HEK293 (cell line): ENCODE measurements at regions of chr6 and their contacts with region 1.

Region 1: DNA sequence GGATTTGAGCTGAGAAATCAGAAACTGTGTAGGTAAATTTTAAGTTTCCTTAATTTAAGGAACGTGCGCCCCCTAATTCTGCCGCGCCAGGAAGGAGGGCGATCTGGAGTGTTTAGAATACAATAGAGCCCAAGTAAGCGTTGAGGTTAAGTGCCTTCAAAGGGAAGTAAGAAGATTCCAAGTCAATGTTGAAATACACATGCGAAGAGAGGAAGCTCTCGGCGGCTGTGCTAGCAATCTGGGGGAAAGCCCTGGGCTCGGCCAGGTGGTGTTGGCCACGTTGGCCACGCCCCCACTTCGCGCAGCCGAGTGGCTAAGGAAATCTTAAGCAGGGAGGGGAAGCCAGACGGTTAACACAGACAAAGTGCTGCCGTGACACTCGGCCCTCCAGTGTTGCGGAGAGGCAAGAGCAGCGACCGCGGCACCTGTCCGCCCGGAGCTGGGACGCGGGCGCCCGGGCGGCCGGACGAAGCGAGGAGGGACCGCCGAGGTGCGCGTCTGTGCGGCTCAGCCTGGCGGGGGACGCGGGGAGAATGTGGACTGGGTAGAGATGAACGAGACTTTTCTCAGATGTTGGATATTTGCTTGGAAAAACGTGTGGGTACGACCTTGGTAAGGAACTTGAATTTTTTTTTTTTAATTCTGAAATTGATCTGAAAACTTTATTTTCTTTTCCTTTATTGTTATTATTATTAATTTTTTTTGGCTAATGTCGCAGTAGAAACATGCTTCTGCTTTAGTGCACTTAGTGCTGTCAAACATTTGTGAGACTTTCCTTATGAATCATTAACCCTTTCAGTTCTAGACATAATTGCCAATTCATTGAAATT is at the start of gene PRDM1:
- H3K4me3 ChIP-seq: peak within 1 kb of the TSS; percentile 52
- H3K27ac ChIP-seq: peak within 1 kb of the TSS; percentile 21; the same call in 1 of the 2 replicates
- H3K4me1 ChIP-seq: peaks cover 8% of the 10 kb centered on the region
- CTCF ChIP-seq: peak; percentile 75

Region 2: GRCh38 chr6:105608711-105609374 is 477.4 kb before region 1 on chr6:
- CTCF ChIA-PET with region 1: no interaction called
- POLR2A ChIA-PET with region 1: no interaction called
- H3K4me3 ChIP-seq: no peak overlapping the region
- H3K27ac ChIP-seq: no peak overlapping the region
- H3K4me1 ChIP-seq: peaks cover 9% of the 10 kb centered on the region
- CTCF ChIP-seq: no peak

Region 3: DNA sequence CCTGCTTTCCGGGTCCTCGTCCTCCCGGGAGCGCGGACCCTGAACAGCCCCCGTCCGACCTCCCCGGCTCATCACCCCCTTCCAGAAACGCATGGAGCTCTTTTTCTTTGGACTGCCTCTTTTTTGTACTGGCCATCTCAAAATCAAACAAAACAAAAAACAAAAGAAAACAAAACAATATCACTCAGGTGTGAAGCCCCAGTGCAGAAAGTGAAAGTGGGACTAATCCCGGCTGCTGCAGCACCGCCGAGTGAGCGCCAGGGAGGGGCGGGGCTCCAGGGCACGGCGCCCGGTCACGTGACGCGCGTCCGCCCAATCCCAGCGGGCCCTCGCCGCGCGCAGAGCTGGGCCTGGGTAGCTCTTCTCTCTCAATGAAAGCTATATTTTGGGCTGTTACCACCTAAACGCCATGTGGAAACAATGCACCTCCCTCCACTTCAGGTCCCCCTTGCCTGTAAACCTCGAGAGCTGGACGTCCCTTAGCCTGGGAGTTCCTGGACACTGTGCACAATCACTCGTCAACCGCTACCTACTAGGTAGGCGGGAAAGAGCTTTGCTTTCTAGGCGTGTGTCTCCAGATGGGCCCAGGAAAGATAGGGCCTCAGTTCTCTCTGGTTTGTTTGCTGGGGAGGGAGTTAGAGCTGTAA is 93.8 kb before region 1 on chr6:
- CTCF ChIA-PET with region 1: interaction called, 11 read pairs
- POLR2A ChIA-PET with region 1: interaction called, 7 read pairs
- H3K4me3 ChIP-seq: peak overlapping the region; percentile 66
- H3K27ac ChIP-seq: peak overlapping the region; percentile 28; the same call in 1 of the 2 replicates
- H3K4me1 ChIP-seq: no peaks in the 10 kb centered on the region
- CTCF ChIP-seq: no peak

Region 4: DNA sequence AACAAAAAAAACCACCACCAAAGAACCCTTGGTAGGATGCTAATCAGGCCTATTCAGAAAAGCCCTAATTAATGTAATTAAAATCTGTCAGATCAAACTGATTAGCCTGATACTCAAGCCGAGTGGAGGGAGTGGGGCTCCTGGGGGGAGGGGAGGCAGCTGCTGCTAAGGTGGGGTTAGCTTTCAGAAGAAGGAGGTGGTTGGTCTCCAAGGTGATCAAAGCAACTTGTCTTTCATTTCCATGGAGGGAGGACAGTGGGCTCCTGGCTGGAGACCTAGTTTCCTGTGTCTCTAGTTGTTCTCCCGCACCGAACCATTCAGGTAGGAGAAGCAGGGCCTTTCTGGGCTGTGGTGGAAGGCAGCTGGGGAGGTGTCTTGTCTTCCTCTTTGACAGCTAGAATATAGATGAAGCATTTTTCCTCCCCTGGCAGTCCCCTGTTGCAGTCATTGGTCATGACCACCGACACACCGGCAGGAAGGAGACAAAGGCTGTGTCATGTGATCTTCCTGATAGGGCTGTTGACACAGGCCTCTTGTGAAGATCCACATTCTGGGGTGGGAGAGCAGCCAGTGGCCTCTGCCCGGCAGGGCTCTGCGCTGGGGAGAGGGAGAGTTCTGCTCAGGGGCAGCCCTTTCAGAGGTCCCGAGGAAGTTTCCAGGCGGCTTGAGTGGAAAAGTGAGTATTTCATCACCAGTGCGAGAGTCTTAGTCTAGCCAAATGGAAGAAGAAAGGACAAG is 39.9 kb before region 1 on chr6:
- CTCF ChIA-PET with region 1: no interaction called
- POLR2A ChIA-PET with region 1: no interaction called
- H3K4me3 ChIP-seq: no peak overlapping the region
- H3K27ac ChIP-seq: no peak overlapping the region
- H3K4me1 ChIP-seq: no peaks in the 10 kb centered on the region
- CTCF ChIP-seq: no peak

Region 5: DNA sequence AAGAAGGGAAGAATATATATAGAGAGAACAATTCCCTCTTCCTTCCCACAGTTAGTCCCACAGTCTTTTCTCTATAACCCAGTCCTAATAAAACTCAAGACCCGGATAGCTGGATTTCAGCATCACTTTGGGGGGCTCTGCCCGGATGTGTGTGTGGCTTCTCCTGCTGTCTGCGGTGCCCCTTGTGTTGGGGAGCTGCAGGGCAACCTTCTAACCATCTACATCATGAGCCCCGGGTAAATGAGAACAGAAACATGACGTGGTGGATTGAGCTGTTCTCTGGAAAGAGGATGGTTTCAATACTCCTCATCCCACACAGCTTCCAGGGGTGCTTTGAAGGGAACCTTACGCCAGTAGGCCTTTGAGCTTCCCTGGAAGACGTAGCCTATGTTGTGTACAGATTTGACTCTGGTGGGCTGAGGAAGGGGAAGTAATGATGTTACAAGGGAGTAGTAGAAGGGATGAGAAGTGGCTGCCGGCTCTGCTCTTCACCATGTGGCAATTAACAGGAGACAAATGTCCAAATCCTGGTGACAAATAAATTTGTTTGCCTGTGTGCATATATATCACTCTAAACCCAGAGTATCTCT is 13.6 kb before region 1 on chr6:
- CTCF ChIA-PET with region 1: interaction called, 10 read pairs
- POLR2A ChIA-PET with region 1: interaction called, 3 read pairs
- H3K4me3 ChIP-seq: no peak overlapping the region
- H3K27ac ChIP-seq: no peak overlapping the region
- H3K4me1 ChIP-seq: peaks cover 8% of the 10 kb centered on the region; the same call in 1 of the 2 replicates
- CTCF ChIP-seq: no peak

Region 6: DNA sequence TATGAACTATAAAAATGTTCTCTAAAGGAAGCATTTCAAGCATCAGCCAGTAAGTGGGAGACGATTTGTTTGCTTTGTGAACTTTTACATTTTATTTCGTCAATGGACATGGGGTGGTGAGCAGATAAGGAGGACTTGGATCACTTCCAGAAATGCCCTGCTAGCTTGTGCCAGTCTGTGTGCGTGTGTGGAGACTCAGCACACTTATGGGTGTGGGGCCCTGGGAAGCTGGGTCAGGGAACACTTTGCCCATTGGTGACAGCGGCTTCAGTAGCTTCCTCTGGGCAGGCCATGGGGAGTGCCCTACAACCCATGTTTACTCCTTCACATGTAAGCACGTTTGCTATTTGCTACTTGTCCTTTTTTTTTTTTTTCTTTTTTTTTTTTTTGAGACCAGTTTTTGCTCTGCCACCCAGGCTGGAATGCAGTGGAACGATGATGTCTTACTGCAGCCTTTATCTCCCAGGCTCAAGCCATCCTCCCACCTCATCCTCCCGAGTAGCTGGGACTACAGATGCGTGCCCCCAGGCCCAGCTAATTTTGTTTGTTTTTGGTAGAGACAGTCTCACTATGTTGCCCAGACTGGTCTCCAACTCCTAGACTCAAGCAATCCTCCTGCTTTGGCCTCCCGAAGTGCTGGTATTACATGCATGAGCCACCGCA is 24.1 kb after region 1 on chr6:
- CTCF ChIA-PET with region 1: no interaction called
- POLR2A ChIA-PET with region 1: no interaction called
- H3K4me3 ChIP-seq: no peak overlapping the region
- H3K27ac ChIP-seq: no peak overlapping the region
- H3K4me1 ChIP-seq: peaks cover 9% of the 10 kb centered on the region
- CTCF ChIP-seq: no peak

Region 7: DNA sequence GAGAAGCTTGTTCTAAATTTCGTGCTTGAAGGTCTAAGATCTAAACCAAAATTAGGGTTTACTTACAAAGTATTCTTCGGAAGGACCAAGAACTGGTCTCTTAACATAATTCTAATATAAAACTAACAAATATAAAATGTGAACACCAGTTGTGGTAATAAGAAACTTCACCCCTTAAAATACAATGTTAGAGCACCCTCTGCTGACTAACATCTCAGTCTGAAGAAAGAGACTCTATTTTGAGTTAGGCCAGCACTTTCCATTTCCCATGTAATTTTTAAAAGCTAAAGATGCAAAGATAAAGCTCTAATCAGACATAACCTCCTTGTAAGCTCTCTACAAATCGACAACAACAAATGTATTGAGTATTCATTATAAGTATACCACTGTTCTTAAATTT is 214.7 kb after region 1 on chr6:
- CTCF ChIA-PET with region 1: interaction called, 10 read pairs
- POLR2A ChIA-PET with region 1: no interaction called
- H3K4me3 ChIP-seq: no peak overlapping the region
- H3K27ac ChIP-seq: no peak overlapping the region
- H3K4me1 ChIP-seq: no peaks in the 10 kb centered on the region
- CTCF ChIP-seq: no peak